K562 (cell line): ENCODE measurements at regions of chr13 and their contacts with region 1.

Region 1: GRCh38 chr13:110915057-110915873 is at the start of gene ANKRD10:
- DNase-seq: peak; percentile 86 to 96 (median 92)
- ATAC-seq: peak; percentile 87
- H3K4me3 ChIP-seq: peak within 1 kb of the TSS; percentile 92
- H3K27ac ChIP-seq: peak within 1 kb of the TSS; percentile 94
- H3K4me1 ChIP-seq: peaks cover 4 to 18% of the 10 kb centered on the region in 2 experiments; a peak in 4 of 5 replicates
- H3K27me3 ChIP-seq: no peaks in the 10 kb centered on the region
- CTCF ChIP-seq: peak; percentile 61 to 80 (median 71)
- EP300 ChIP-seq: 0 out of 2 replicates have a peak, but pooled peaks have one; percentile 8
- POLR2A ChIP-seq: peak; percentile 58
- RAD21 ChIP-seq: peak; percentile 44 to 51
- polyA plus RNA-seq, gene ANKRD10: 22.1 to 31.0 TPM

Region 2: GRCh38 chr13:110593430-110594130 is 321.7 kb before region 1 on chr13:
- CTCF ChIA-PET with region 1: no interaction called
- POLR2A ChIA-PET with region 1: no interaction called
- in situ Hi-C with region 1: no loop called
- intact Hi-C with region 1: loop called (anchors 5 kb)
- DNase-seq: peak; percentile 32 to 77 (median 52)
- ATAC-seq: peak; percentile 96
- H3K4me3 ChIP-seq: no peak overlapping the region
- H3K27ac ChIP-seq: no peak overlapping the region
- H3K4me1 ChIP-seq: peaks cover 7% of the 10 kb centered on the region in 2 experiments; a peak in 4 of 5 replicates
- H3K27me3 ChIP-seq: no peaks in the 10 kb centered on the region
- CTCF ChIP-seq: peak; percentile 45 to 72 (median 52); a peak in 5 of 6 replicates
- EP300 ChIP-seq: 0 out of 2 replicates have a peak, but pooled peaks have one; percentile 6
- POLR2A ChIP-seq: no peak
- RAD21 ChIP-seq: peak; percentile 79

Region 3: DNA sequence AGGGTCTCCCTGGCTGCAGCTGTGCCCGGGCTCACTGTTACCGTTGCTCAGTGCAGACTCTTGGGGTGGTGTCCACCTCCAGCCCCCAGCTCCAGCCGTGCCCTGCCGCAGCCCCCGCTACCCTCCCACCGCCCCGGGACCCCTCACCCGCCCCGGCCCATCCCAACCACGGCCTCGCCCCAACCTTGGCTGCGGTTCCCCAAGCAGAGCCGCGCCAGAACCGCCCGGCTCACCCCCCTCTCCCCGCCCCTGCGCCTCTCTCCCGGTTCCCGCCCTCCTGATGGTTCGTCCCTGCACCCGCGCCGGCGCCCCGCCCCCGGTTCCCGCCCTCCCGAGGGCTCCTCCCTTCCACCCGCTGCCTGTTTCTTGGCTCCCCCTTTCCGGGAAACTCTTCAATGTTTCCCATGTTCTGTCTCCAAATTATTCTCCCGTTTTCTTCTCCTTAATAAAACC is 40.7 kb before region 1 on chr13:
- CTCF ChIA-PET with region 1: no interaction called
- POLR2A ChIA-PET with region 1: no interaction called
- in situ Hi-C with region 1: no loop called
- intact Hi-C with region 1: loop called (anchors 2 kb)
- DNase-seq: peak; percentile 90 to 91 (median 90)
- ATAC-seq: peak; percentile 92
- H3K4me3 ChIP-seq: peak overlapping the region; percentile 35
- H3K27ac ChIP-seq: peak overlapping the region; percentile 55
- H3K4me1 ChIP-seq: peaks cover 22 to 31% of the 10 kb centered on the region in 2 experiments; a peak in 4 of 5 replicates
- H3K27me3 ChIP-seq: no peaks in the 10 kb centered on the region
- CTCF ChIP-seq: no peak
- EP300 ChIP-seq: no peak
- POLR2A ChIP-seq: no peak
- RAD21 ChIP-seq: no peak

Region 4: GRCh38 chr13:110965038-110965754 is 49.9 kb after region 1 on chr13:
- CTCF ChIA-PET with region 1: no interaction called
- POLR2A ChIA-PET with region 1: no interaction called
- in situ Hi-C with region 1: no loop called
- intact Hi-C with region 1: no loop called
- DNase-seq: peak; percentile 25 to 92 (median 37)
- ATAC-seq: peak; percentile 88
- H3K4me3 ChIP-seq: peak overlapping the region; percentile 29
- H3K27ac ChIP-seq: peak overlapping the region; percentile 99
- H3K4me1 ChIP-seq: peaks cover 0 to 27% of the 10 kb centered on the region in 2 experiments; a peak in 3 of 5 replicates
- H3K27me3 ChIP-seq: no peaks in the 10 kb centered on the region
- CTCF ChIP-seq: no peak
- EP300 ChIP-seq: peak; percentile 97
- POLR2A ChIP-seq: peak; percentile 55; the same call in 1 of the 2 replicates
- RAD21 ChIP-seq: no peak; a peak in 1 of 4 replicates